CD4-positive, alpha-beta memory T cell (primary cell): ENCODE measurements at regions of chr4 and their contacts with region 1.

Region 1: GRCh38 chr4:121823505-121824170 is at the start of gene CCNA2:
- DNase-seq: peak; percentile 93 to 97 (median 94)
- H3K4me3 ChIP-seq: peak within 1 kb of the TSS; percentile 62 to 73
- H3K4me3 Mint-ChIP-seq: peak within 1 kb of the TSS; percentile 87 to 98 (median 91)
- H3K27ac ChIP-seq: peak within 1 kb of the TSS; percentile 55
- H3K27ac Mint-ChIP-seq: peak within 1 kb of the TSS; percentile 77 to 99 (median 92)
- H3K4me1 ChIP-seq: peaks cover 19% of the 10 kb centered on the region
- H3K4me1 Mint-ChIP-seq: peaks cover 6 to 21% (median 15%) of the 10 kb centered on the region in 4 donors
- H3K27me3 ChIP-seq: no peaks in the 10 kb centered on the region
- H3K27me3 Mint-ChIP-seq: no peaks in the 10 kb centered on the region
- total RNA-seq, gene CCNA2: 1.2 to 1.4 TPM

Region 2: DNA sequence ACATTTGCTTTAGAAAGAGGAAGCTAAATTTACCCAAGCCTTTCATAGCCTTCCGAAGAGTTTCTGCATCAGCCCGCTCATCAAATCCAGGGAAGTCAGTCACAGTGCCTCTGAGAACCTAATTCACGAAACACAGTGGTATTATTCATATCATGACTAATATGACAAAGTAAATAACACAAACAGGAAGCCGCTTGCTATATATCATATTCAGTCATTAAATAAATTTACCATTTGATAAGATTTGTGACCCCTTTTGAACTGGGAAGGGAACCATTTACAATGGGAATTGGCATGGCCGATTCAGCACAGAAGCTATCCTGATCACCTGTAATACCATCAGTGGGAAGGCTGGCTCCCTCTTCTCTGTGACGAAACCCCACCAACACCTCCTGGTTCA is 137.4 kb before region 1 on chr4:
- CTCF ChIA-PET with region 1: no interaction called
- POLR2A ChIA-PET with region 1: no interaction called
- intact Hi-C with region 1: no loop called
- DNase-seq: no peak
- H3K4me3 ChIP-seq: no peak overlapping the region
- H3K4me3 Mint-ChIP-seq: no peak overlapping the region
- H3K27ac ChIP-seq: no peak overlapping the region
- H3K27ac Mint-ChIP-seq: peak overlapping the region in 1 of 7 donors; percentile 1
- H3K4me1 ChIP-seq: peaks cover 7% of the 10 kb centered on the region
- H3K4me1 Mint-ChIP-seq: peaks cover 0 to 9% (median 5%) of the 10 kb centered on the region in 4 donors
- H3K27me3 ChIP-seq: no peaks in the 10 kb centered on the region
- H3K27me3 Mint-ChIP-seq: no peaks in the 10 kb centered on the region

Region 3: GRCh38 chr4:121696581-121697461 is 126.8 kb before region 1 on chr4 and contains the start of gene ANXA5:
- CTCF ChIA-PET with region 1: no interaction called
- POLR2A ChIA-PET with region 1: interaction called, 6 read pairs
- intact Hi-C with region 1: loop called (anchors 5 kb)
- DNase-seq: peak; percentile 62 to 72 (median 70)
- H3K4me3 ChIP-seq: peak within 1 kb of the TSS; percentile 78 to 80
- H3K4me3 Mint-ChIP-seq: peak within 1 kb of the TSS; percentile 97 to 100 (median 99)
- H3K27ac ChIP-seq: peak within 1 kb of the TSS; percentile 55
- H3K27ac Mint-ChIP-seq: peak within 1 kb of the TSS; percentile 89 to 99 (median 96)
- H3K4me1 ChIP-seq: peaks cover 21% of the 10 kb centered on the region
- H3K4me1 Mint-ChIP-seq: peaks cover 29 to 37% (median 31%) of the 10 kb centered on the region in 4 donors
- H3K27me3 ChIP-seq: no peaks in the 10 kb centered on the region
- H3K27me3 Mint-ChIP-seq: peaks cover 0 to 1% of the 10 kb centered on the region in 2 donors
- total RNA-seq, gene ANXA5: 70.7 to 77.0 TPM

Region 4: DNA sequence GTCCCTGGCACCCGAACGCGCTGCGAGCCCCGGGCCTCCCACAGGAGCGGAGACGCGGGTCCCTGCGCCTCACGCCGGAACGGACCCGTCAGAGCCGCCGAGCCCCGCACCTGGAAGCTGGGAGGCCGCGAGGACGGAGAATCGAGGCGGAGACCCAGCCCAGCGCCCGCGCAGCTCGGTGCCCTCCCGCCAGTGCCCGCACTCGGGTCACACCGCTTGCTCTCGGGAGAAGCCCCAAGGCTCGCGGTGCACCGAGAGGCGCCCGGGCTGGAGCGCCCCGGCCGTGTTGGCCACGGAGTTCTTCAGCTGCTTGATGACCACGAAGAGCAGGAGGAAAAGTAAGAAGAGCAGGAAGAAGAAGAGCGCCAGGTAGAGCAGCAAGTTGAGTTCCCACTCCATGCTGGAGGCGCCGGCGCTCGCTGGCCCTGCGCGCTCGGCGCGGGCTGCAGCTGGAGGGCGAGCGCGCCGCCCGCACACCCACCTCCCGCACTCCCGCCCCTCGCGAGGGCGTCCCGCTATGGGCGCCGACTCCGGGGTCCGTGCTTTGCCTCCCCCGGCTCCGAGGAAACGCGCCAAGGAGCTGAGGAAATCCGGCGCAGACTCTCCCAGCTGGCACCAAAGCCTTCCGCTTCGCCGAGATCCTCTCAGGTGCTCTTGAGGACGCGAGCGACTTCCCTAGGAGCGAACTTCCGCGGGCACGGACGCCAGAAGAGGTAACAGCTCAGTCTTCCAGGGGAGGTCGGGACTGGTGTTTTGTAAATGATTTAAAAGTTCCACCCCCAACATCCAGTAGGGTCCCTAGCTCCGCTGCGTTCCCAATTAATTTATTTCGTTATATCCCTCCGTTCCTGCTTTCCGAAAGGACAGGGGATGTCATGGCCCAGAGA is 58.7 kb before region 1 on chr4 and contains the start of gene SMIM43:
- CTCF ChIA-PET with region 1: no interaction called
- POLR2A ChIA-PET with region 1: no interaction called
- intact Hi-C with region 1: no loop called
- DNase-seq: no peak
- H3K4me3 ChIP-seq: no peak within 1 kb of the TSS
- H3K4me3 Mint-ChIP-seq: peak within 1 kb of the TSS; percentile 10 to 75 (median 39)
- H3K27ac ChIP-seq: no peak within 1 kb of the TSS
- H3K27ac Mint-ChIP-seq: no peak within 1 kb of the TSS
- H3K4me1 ChIP-seq: no peaks in the 10 kb centered on the region
- H3K4me1 Mint-ChIP-seq: peaks cover 4 to 13% (median 10%) of the 10 kb centered on the region in 4 donors
- H3K27me3 ChIP-seq: peaks cover 23% of the 10 kb centered on the region
- H3K27me3 Mint-ChIP-seq: peaks cover 35 to 37% of the 10 kb centered on the region in 2 donors
- total RNA-seq, gene SMIM43: not detected

Region 5: DNA sequence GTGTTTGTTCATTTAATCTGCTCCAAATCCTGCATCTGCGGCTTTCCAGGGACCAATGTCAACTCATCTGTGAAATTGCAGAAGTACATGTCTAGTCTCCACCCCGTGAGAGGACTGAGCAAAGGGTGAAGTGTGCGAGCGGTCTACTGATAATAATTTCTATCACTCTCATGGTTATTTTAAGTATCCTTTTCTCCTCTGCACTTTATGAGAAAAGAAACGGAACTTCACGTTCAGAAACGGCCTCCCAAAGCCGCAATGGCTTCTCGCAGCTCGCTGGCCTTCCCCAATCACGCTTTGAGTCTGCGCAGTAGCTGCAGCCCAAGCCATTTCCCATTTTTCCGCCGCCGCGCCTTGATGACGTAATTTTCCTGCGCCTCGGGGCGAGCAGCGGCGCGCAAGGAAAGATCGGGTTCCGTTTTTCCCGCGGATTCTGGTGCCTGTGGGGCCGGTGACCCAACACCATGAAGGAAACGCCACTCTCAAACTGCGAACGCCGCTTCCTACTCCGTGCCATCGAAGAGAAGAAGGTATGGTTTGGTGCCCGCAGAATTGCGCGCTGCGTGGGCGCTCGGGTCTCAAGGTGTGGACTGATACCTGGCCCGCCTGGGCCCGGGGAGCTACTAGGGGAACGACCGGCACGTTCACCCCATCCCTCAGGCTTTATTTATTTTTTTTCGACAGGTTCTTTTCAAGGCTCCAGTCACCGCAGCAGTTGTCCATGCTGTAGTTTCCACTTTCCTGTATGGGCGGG is 22.5 kb before region 1 on chr4 and contains the start of gene EXOSC9:
- CTCF ChIA-PET with region 1: interaction called, 3 read pairs
- POLR2A ChIA-PET with region 1: interaction called, 56 read pairs
- intact Hi-C with region 1: loop called (anchors 1 kb)
- DNase-seq: peak; percentile 93 to 96 (median 93)
- H3K4me3 ChIP-seq: peak within 1 kb of the TSS; percentile 74 to 98
- H3K4me3 Mint-ChIP-seq: peak within 1 kb of the TSS; percentile 92 to 100 (median 96)
- H3K27ac ChIP-seq: peak within 1 kb of the TSS; percentile 88
- H3K27ac Mint-ChIP-seq: peak within 1 kb of the TSS; percentile 94 to 100 (median 99)
- H3K4me1 ChIP-seq: peaks cover 50% of the 10 kb centered on the region
- H3K4me1 Mint-ChIP-seq: peaks cover 29 to 52% (median 39%) of the 10 kb centered on the region in 4 donors
- H3K27me3 ChIP-seq: no peaks in the 10 kb centered on the region
- H3K27me3 Mint-ChIP-seq: peaks cover 0 to 3% of the 10 kb centered on the region in 2 donors
- total RNA-seq, gene EXOSC9: 43.0 to 45.4 TPM

Region 6: GRCh38 chr4:121869841-121870656 is 46.4 kb after region 1 on chr4 and contains the start of gene BBS7:
- CTCF ChIA-PET with region 1: interaction called, 5 read pairs
- POLR2A ChIA-PET with region 1: interaction called, 17 read pairs
- intact Hi-C with region 1: loop called (anchors 1 kb)
- DNase-seq: peak; percentile 88 to 95 (median 89)
- H3K4me3 ChIP-seq: peak within 1 kb of the TSS; percentile 92 to 97
- H3K4me3 Mint-ChIP-seq: peak within 1 kb of the TSS; percentile 91 to 98 (median 96)
- H3K27ac ChIP-seq: peak within 1 kb of the TSS; percentile 81
- H3K27ac Mint-ChIP-seq: peak within 1 kb of the TSS; percentile 79 to 98 (median 94)
- H3K4me1 ChIP-seq: peaks cover 19% of the 10 kb centered on the region
- H3K4me1 Mint-ChIP-seq: peaks cover 9 to 30% (median 16%) of the 10 kb centered on the region in 4 donors
- H3K27me3 ChIP-seq: peaks cover 6% of the 10 kb centered on the region
- H3K27me3 Mint-ChIP-seq: peaks cover 4 to 6% of the 10 kb centered on the region in 2 donors
- total RNA-seq, gene BBS7: 8.8 to 10.1 TPM

Region 7: GRCh38 chr4:122151982-122152710 is 328.5 kb after region 1 on chr4 and contains the start of gene BLTP1:
- CTCF ChIA-PET with region 1: no interaction called
- POLR2A ChIA-PET with region 1: no interaction called
- intact Hi-C with region 1: loop called (anchors 10 kb)
- DNase-seq: peak; percentile 85 to 89 (median 88)
- H3K4me3 ChIP-seq: peak within 1 kb of the TSS; percentile 73 to 92
- H3K4me3 Mint-ChIP-seq: peak within 1 kb of the TSS; percentile 92 to 100 (median 96)
- H3K27ac ChIP-seq: peak within 1 kb of the TSS; percentile 85
- H3K27ac Mint-ChIP-seq: peak within 1 kb of the TSS; percentile 92 to 100 (median 99)
- H3K4me1 ChIP-seq: peaks cover 63% of the 10 kb centered on the region
- H3K4me1 Mint-ChIP-seq: peaks cover 51 to 84% (median 64%) of the 10 kb centered on the region in 4 donors
- H3K27me3 ChIP-seq: no peaks in the 10 kb centered on the region
- H3K27me3 Mint-ChIP-seq: no peaks in the 10 kb centered on the region
- total RNA-seq, gene BLTP1: 83.9 to 87.5 TPM

Region 8: DNA sequence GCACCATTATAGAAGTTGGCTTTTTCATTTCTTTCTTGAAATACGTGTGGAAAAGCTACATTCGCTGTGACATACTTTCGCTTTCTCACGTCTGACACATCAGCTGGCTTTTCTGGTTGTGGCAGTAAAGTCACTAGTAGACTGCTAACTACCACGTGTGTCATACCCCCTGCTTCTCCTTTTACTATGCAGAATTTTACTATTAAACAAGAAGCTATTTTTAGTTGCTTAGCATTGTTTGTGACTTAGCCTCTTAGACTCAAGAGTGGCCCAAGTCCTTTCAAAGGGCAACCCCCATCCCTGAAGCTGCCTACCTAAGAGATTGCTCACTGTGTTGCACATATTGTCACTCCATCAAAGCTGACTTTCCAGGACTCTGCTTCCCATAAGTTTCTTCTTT is 635.0 kb after region 1 on chr4:
- CTCF ChIA-PET with region 1: no interaction called
- POLR2A ChIA-PET with region 1: no interaction called
- intact Hi-C with region 1: loop called (anchors 10 kb)
- DNase-seq: peak; percentile 45 to 70 (median 53)
- H3K4me3 ChIP-seq: peak overlapping the region; percentile 26 to 75
- H3K4me3 Mint-ChIP-seq: peak overlapping the region; percentile 84 to 90 (median 88)
- H3K27ac ChIP-seq: peak overlapping the region; percentile 42
- H3K27ac Mint-ChIP-seq: peak overlapping the region; percentile 81 to 95 (median 93)
- H3K4me1 ChIP-seq: peaks cover 55% of the 10 kb centered on the region
- H3K4me1 Mint-ChIP-seq: peaks cover 40 to 52% (median 46%) of the 10 kb centered on the region in 4 donors
- H3K27me3 ChIP-seq: no peaks in the 10 kb centered on the region
- H3K27me3 Mint-ChIP-seq: no peaks in the 10 kb centered on the region

Region 9: DNA sequence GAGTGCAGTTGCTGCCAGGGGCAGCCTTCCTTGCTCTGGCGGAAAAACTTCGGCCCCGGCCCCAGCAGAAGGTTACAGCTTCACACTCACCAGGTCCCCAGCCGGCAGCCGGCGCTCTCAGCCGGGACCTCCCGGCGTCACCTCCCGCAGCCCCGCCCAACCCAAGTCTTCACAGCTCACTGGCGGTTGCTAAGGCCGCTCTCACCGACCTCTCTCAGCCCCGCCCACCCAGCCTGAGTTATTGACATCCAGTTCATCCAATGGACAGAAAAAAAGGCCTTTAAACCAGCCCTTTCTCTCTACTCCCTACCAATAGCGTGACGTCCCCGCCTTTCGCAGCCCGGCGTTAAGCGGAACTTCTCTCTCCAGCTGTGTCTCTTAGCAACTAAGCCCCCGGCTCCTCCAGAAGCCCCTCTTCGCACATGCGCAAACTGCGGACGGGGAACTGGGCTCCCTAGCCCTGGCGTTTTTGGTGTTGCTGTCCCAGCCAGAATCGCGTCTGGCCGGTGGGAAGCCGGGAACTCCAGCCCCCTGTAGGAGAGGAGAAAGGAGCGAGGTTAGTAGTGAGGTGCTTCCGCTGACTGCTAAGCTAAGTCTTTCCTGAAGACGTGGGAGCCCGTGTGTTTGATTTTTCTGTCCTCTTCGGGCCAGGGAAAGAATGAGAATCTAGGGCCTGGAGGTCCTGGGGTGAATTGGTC is 908.8 kb after region 1 on chr4 and contains the start of gene BBS12:
- CTCF ChIA-PET with region 1: no interaction called
- POLR2A ChIA-PET with region 1: interaction called, 3 read pairs
- intact Hi-C with region 1: loop called (anchors 5 kb)
- DNase-seq: peak; percentile 99
- H3K4me3 ChIP-seq: peak within 1 kb of the TSS; percentile 96 to 98
- H3K4me3 Mint-ChIP-seq: peak within 1 kb of the TSS; percentile 97 to 99 (median 98)
- H3K27ac ChIP-seq: peak within 1 kb of the TSS; percentile 75
- H3K27ac Mint-ChIP-seq: peak within 1 kb of the TSS; percentile 95 to 100 (median 99)
- H3K4me1 ChIP-seq: peaks cover 19% of the 10 kb centered on the region
- H3K4me1 Mint-ChIP-seq: peaks cover 11 to 22% (median 17%) of the 10 kb centered on the region in 4 donors
- H3K27me3 ChIP-seq: no peaks in the 10 kb centered on the region
- H3K27me3 Mint-ChIP-seq: no peaks in the 10 kb centered on the region
- total RNA-seq, gene BBS12: 3.7 to 4.1 TPM